Psoas muscle (tissue), 8 donors: ENCODE measurements at regions of chr7 and their contacts with region 1.

Region 1: DNA sequence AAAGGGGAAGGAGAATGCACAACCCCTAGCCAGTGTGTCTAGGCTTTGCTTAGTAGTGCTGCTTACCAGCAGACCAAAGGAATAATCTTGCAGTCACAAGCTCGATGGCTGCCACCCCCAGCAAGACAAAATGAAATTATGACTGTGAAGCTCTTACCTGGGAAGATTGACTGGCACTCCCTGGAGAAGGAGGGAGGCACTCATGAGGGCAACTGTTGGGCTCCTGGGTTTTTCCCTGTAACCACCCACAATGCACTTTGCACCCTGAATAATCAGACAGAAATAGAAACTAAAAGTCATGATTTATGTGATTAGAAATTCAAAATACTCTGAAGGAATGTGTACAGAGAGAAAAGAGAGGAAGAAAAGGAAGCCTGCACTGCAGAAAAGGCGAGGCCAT is 144.3 kb upstream of the DGKB start:
- DNase-seq: no peak
- ATAC-seq: no peak
- H3K4me3 ChIP-seq: no peak overlapping the region
- H3K27ac ChIP-seq: no peak overlapping the region
- H3K4me1 ChIP-seq: no peaks in the 10 kb centered on the region
- H3K27me3 ChIP-seq: no peaks in the 10 kb centered on the region
- CTCF ChIP-seq: no peak

Region 2: DNA sequence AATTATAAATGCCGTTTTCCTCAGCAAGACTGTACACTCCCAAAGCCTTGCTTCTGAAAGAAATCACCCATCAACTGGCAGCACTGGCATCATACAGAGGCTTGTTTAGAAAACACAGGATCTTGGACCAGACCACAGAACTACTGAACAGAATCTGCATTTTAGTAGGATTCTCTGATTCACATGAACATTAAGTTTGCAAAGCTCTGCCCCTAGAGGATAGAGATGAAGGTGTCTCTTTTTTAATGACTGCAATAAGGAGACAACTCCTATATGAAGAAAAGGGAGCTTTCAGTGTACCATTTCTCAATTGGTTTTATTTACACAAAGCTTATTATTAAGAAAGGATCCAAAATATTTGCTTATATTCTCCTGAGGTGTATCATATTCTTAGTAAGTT is 342.2 kb after region 1 on chr7:
- intact Hi-C with region 1: loop called in 1 of 2 experiments (anchors 5 kb)
- DNase-seq: no peak
- ATAC-seq: no peak
- H3K4me3 ChIP-seq: no peak overlapping the region
- H3K27ac ChIP-seq: no peak overlapping the region
- H3K4me1 ChIP-seq: no peaks in the 10 kb centered on the region
- H3K27me3 ChIP-seq: no peaks in the 10 kb centered on the region
- CTCF ChIP-seq: no peak